ENCODE measurements at regions of chr2 and their contacts with region 1.

Region 1: DNA sequence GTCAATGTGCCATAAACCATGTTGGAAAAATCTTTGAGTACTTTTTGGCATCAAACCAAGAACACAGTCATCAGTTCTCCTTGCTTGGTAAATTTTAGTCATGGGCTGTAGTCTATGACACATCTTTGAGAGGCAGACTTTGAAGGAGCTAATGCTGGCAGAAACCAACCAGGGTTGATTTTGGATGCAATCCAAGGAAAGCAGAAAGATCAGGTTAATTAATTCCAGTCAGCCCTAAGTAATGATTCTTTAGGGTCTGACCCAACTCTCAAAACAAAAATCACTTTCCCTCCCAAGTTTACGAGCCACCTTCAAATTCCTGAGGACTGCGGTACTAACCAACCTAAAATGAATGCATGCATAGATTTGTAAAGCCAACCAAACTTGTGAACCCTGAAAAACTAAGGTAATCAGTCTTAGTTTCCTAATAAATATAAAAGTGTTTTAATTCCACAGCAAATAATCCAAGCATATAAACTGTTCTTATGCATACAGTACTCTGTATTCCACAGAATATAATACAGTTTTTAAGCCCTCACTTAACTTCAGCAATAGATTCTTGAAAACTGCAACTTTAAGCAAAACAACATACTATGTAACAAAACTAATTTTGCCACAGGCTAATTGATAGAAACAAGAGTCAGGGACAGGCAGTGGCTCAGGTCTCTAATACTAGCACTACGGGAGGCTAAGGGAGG is 22.0 kb downstream of the AP1S3 start:
- DNase-seq: no peak
- H3K4me3 ChIP-seq: no peak overlapping the region
- H3K27ac ChIP-seq: no peak overlapping the region
- H3K4me1 ChIP-seq: peaks cover 0 to 3% of the 10 kb centered on the region in 2 donors
- H3K27me3 ChIP-seq: no peaks in the 10 kb centered on the region
- CTCF ChIP-seq: no peak

Region 2: DNA sequence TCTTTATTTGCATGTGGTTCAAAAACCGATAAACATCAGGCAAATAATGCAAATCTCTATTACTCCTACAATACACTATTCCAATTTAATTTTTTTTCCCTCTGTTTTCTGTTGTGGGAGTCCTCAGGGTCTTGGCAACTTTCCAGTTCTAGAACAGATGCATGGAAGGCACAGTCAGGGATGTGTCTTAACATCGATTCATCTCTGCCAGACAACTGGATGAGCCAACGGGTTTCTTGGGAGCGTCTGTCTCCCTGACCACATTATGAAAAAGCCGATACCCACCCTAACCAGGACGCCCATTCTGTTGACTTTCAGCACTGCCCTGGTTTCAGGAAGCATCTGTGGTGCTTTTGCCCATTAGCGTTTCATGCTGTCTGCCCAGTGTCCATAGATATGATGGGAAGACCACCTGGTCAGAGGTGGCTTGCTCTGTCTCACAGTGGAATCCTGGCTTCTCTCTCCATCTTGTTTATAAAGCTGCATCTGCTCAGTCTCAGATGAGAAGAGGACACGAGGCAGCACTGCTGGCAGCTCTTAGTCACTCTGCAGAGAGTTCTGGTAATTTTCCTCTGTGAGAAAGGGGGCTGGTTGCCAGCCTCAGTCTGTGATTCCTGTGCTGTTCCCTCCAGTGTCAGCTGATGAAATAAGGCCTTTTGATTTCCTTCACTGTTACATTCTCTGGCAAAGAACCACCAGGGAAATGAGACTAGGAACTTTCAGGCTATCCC is 821.2 kb before region 1 on chr2:
- intact Hi-C with region 1: loop called (anchors 5 kb)
- DNase-seq: peak; percentile 69 to 94
- H3K4me3 ChIP-seq: peak overlapping the region; percentile 19 to 40
- H3K27ac ChIP-seq: peak overlapping the region; percentile 77 to 96
- H3K4me1 ChIP-seq: peaks cover 9 to 16% of the 10 kb centered on the region in 2 donors
- H3K27me3 ChIP-seq: no peaks in the 10 kb centered on the region
- CTCF ChIP-seq: no peak